ENCODE measurements at regions of chr11 and their contacts with region 1.

Region 1: GRCh38 chr11:3854977-3855807 is at the start of gene STIM1:
- DNase-seq: peak; percentile 75 to 100
- H3K4me3 ChIP-seq: peak within 1 kb of the TSS; percentile 47 to 84 (median 72)
- H3K27ac ChIP-seq: no peak within 1 kb of the TSS
- H3K4me1 ChIP-seq: peaks cover 10 to 17% (median 11%) of the 10 kb centered on the region in 4 experiments
- H3K27me3 ChIP-seq: peaks cover 0 to 13% (median 8%) of the 10 kb centered on the region in 4 experiments; a peak in 5 of 7 replicates
- CTCF ChIP-seq: peak; percentile 84 to 90 (median 90)
- EP300 ChIP-seq: peak in 1 of 2 experiments; percentile 67; a peak in 1 of 3 replicates
- POLR2A ChIP-seq: peak in 1 of 2 experiments; percentile 52; a peak in 1 of 3 replicates
- RAD21 ChIP-seq: peak; percentile 74 to 85
- total RNA-seq, gene STIM1: 11.6 and 12.2 TPM in 2 replicates

Region 2: DNA sequence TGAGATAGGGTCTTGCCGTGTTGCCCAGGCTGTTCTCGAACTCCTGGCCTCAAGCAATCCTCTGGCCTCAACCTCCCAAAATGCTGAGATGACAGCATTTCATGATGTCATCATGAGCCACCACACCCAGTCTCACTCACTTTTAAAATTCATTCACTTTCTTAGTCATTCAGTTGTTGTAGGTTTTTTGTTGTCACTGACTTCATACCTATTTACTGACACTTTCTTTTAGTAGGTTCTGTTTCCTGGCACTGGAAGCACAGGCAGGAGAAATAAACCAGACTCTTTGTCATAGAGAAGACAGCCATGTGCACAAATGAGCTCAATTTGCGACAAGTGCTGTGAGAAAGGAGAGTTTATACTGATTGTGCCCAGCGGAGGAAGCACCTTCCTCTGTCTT is 223.9 kb before region 1 on chr11:
- CTCF ChIA-PET with region 1: no interaction called
- POLR2A ChIA-PET with region 1: no interaction called
- DNase-seq: no peak
- H3K4me3 ChIP-seq: no peak overlapping the region
- H3K27ac ChIP-seq: no peak overlapping the region
- H3K4me1 ChIP-seq: no peaks in the 10 kb centered on the region
- H3K27me3 ChIP-seq: no peaks in the 10 kb centered on the region
- CTCF ChIP-seq: no peak
- EP300 ChIP-seq: no peak
- POLR2A ChIP-seq: no peak
- RAD21 ChIP-seq: no peak

Region 3: GRCh38 chr11:3753110-3753509 is 102.1 kb before region 1 on chr11:
- CTCF ChIA-PET with region 1: no interaction called
- POLR2A ChIA-PET with region 1: no interaction called
- DNase-seq: no peak
- H3K4me3 ChIP-seq: no peak overlapping the region
- H3K27ac ChIP-seq: no peak overlapping the region
- H3K4me1 ChIP-seq: no peaks in the 10 kb centered on the region
- H3K27me3 ChIP-seq: no peaks in the 10 kb centered on the region
- CTCF ChIP-seq: no peak
- EP300 ChIP-seq: no peak
- POLR2A ChIP-seq: no peak
- RAD21 ChIP-seq: no peak

Region 4: GRCh38 chr11:3841426-3842350 is 13.5 kb before region 1 on chr11:
- CTCF ChIA-PET with region 1: interaction called, 214 read pairs
- POLR2A ChIA-PET with region 1: interaction called, 13 read pairs
- DNase-seq: peak in 1 of 2 experiments; percentile 59
- H3K4me3 ChIP-seq: peak overlapping the region; percentile 36 to 97 (median 59)
- H3K27ac ChIP-seq: no peak overlapping the region
- H3K4me1 ChIP-seq: peaks cover 5 to 14% (median 8%) of the 10 kb centered on the region in 4 experiments; a peak in 4 of 7 replicates
- H3K27me3 ChIP-seq: peaks cover 0 to 3% (median 0%) of the 10 kb centered on the region in 4 experiments; a peak in 1 of 7 replicates
- CTCF ChIP-seq: peak; percentile 66 to 83 (median 72)
- EP300 ChIP-seq: 0 out of 3 replicates have a peak, but pooled peaks of 1 of the 2 experiments have one; percentile 6
- POLR2A ChIP-seq: no peak
- RAD21 ChIP-seq: peak; percentile 40 to 68; a peak in 3 of 4 replicates

Region 5: DNA sequence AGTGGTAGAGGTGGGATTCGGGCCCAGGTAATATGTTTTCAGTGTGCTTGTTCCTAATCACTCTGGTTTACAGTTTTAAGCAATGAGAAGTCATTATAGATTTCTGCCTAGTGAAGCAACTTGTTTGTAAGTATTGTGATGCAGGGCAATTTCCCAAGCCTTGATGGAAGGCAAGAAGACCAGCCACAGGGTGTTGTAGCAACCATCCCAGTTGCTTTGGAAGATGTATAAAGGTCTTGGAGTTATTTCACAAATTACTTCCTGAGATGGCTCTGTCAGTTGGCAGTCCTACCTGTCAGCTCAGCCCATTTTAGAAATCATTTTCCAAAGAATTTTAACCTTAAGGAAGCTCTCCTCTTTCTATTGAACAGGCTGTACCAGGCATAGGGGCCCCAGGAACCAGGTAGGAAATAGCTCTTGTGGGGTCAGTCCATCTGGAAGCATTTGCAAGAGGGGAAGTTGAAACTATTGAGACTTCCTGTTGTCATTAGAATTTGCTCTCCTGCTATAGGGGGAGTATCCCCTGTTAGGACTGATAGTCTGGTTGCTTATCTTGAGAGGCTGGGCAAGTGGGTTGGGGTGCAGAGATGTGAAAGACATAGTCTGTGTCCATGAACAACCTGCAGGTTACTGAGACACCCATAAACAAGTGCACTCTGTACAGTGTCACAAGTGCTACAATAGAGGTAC is 48.2 kb after region 1 on chr11:
- CTCF ChIA-PET with region 1: interaction called, 14 read pairs
- POLR2A ChIA-PET with region 1: no interaction called
- DNase-seq: no peak
- H3K4me3 ChIP-seq: no peak overlapping the region
- H3K27ac ChIP-seq: no peak overlapping the region
- H3K4me1 ChIP-seq: peaks cover 0 to 5% (median 0%) of the 10 kb centered on the region in 4 experiments; a peak in 1 of 7 replicates
- H3K27me3 ChIP-seq: no peaks in the 10 kb centered on the region
- CTCF ChIP-seq: no peak
- EP300 ChIP-seq: no peak
- POLR2A ChIP-seq: no peak
- RAD21 ChIP-seq: no peak

Region 6: DNA sequence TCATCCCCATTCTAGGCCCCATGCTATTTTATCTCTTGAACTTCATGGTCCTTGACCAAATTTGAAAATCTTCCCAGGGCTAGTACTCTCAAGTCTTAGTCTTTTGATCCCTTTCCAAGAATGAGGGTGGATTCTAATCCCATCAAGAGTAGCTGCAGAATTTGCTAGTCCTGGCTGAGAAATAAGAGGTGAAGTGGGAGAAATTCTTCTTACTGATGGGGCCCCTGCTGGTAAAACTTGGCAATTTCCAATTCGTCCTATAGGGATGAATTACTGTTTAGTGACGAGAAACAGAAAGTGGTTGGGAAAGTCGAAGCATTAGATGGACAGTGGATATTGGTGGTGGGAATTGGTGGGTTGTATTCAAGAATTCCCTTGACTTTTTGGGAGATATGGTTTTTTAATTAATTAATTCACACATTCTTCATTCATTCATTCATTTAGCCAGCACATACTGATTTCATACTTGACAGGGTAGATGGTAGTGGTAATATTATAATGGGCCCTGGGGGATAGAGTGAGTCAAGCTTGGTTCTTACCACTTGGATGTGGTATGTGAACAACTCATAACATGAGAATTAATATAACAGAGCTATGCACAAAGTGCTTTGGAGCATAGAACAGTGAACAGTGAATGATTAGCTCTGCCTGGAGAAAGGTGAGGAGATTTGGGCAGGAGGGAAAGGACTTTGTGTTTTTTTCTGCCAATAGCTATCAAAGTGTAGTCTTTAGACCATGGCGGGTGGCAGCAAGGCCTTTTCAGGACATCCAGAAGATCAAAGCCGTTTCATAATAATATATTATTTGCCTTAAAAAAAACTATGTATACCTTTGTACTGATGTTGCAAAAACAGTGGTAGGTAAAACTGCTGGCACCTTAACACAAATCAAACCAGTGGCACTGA is 104.1 kb after region 1 on chr11:
- CTCF ChIA-PET with region 1: interaction called, 36 read pairs
- POLR2A ChIA-PET with region 1: no interaction called
- DNase-seq: no peak
- H3K4me3 ChIP-seq: no peak overlapping the region
- H3K27ac ChIP-seq: no peak overlapping the region
- H3K4me1 ChIP-seq: no peaks in the 10 kb centered on the region
- H3K27me3 ChIP-seq: no peaks in the 10 kb centered on the region
- CTCF ChIP-seq: peak in 2 of 3 experiments; percentile 27 to 35; a peak in 2 of 4 replicates
- EP300 ChIP-seq: no peak
- POLR2A ChIP-seq: no peak
- RAD21 ChIP-seq: peak; percentile 32 to 42; a peak in 3 of 4 replicates

Region 7: GRCh38 chr11:3984896-3985295 is 129.7 kb after region 1 on chr11:
- CTCF ChIA-PET with region 1: interaction called, 34 read pairs
- POLR2A ChIA-PET with region 1: no interaction called
- DNase-seq: peak in 1 of 2 experiments; percentile 9
- H3K4me3 ChIP-seq: no peak overlapping the region
- H3K27ac ChIP-seq: no peak overlapping the region
- H3K4me1 ChIP-seq: no peaks in the 10 kb centered on the region
- H3K27me3 ChIP-seq: no peaks in the 10 kb centered on the region; a peak in 1 of 7 replicates
- CTCF ChIP-seq: peak; percentile 37 to 61 (median 51)
- EP300 ChIP-seq: no peak
- POLR2A ChIP-seq: no peak
- RAD21 ChIP-seq: peak; percentile 74 to 83

Region 8: GRCh38 chr11:4025248-4025966 is 170.2 kb after region 1 on chr11:
- CTCF ChIA-PET with region 1: no interaction called
- POLR2A ChIA-PET with region 1: no interaction called
- DNase-seq: no peak
- H3K4me3 ChIP-seq: no peak overlapping the region
- H3K27ac ChIP-seq: no peak overlapping the region
- H3K4me1 ChIP-seq: no peaks in the 10 kb centered on the region
- H3K27me3 ChIP-seq: no peaks in the 10 kb centered on the region
- CTCF ChIP-seq: no peak
- EP300 ChIP-seq: no peak
- POLR2A ChIP-seq: no peak
- RAD21 ChIP-seq: no peak

Region 9: GRCh38 chr11:4087551-4087950 is 232.4 kb after region 1 on chr11:
- CTCF ChIA-PET with region 1: interaction called, 29 read pairs
- POLR2A ChIA-PET with region 1: no interaction called
- DNase-seq: no peak
- H3K4me3 ChIP-seq: no peak overlapping the region
- H3K27ac ChIP-seq: no peak overlapping the region
- H3K4me1 ChIP-seq: no peaks in the 10 kb centered on the region
- H3K27me3 ChIP-seq: 0 out of 7 replicates have a peak, but pooled peaks cover 0 to 4% (median 0%) of the 10 kb centered on the region in 4 experiments
- CTCF ChIP-seq: peak in 2 of 3 experiments; percentile 14 to 62; a peak in 2 of 4 replicates
- EP300 ChIP-seq: no peak
- POLR2A ChIP-seq: no peak
- RAD21 ChIP-seq: no peak